Activated CD8-positive, alpha-beta T cell treated with anti-CD3 and anti-CD28 coated beads for 36 hours (primary cell): ENCODE measurements at regions of chr3 and their contacts with region 1.

Region 1: DNA sequence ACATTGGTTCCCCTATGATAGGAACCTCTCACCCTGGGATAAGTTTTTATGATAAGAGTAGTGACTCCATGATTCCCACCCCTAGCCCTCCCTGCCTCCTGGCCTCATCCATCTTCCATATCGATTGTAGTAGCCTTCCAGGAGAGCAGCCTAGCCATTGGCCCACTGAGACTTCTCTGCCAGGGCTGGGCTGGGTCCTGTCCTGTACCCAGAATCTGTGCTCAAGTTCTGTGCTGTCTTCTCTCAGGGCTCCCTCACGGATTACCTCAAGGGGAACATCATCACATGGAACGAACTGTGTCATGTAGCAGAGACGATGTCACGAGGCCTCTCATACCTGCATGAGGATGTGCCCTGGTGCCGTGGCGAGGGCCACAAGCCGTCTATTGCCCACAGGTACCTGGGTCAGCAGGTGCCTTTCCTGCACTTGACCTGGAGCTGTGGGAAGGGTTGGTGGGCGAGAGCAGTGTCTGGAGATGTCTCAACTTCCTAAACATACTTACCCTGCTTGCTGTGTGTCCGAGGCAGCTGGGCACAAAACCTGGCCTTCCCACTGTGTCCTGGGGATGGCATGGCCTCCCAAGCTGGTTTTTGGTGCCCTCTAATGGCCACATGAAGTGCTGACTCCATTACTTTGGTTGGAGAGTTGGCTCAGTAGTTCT is 16.6 kb upstream of the EXOG start:
- DNase-seq: peak; percentile 59
- ATAC-seq: peak; percentile 75
- H3K4me3 Mint-ChIP-seq: no peak overlapping the region
- H3K27ac Mint-ChIP-seq: no peak overlapping the region
- H3K4me1 Mint-ChIP-seq: no peaks in the 10 kb centered on the region
- H3K27me3 Mint-ChIP-seq: no peaks in the 10 kb centered on the region
- CTCF ChIP-seq: peak; percentile 81

Region 2: DNA sequence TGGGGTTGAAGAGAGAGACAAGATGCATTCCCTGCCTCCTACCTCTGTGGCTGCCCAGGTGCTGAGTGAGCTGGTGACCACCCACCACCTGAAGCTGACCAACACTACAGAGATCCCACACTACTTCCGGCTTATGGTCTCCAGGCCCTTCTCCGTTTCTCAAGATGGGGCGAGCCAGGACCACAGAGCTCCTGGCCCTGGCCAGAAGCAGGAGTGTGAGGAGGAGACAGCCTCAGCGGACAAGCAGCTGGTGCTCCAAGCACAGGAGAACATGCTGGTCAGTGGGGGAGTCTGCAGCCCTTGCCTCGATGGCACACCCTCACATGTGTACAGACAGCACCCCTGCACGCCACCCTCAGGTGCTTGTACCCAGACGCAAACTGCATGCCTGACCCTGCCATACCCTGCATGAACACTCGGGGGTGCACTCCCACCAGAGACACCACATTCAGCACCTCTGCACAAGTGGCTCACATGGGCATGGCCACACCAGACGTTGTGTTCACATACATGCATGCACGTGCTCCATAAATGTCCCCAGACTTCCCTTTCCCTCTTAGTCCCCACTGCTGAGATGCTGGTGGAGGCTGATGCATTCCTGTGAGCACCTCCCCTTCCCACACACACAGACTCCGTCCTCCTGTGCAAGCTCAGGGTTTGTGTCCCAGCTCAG is 361.7 kb before region 1 on chr3:
- CTCF ChIA-PET with region 1: interaction called, 20 read pairs
- POLR2A ChIA-PET with region 1: no interaction called
- intact Hi-C with region 1: loop called (anchors 10 kb)
- DNase-seq: peak; percentile 87
- ATAC-seq: peak; percentile 97
- H3K4me3 Mint-ChIP-seq: no peak overlapping the region
- H3K27ac Mint-ChIP-seq: no peak overlapping the region
- H3K4me1 Mint-ChIP-seq: peaks cover 7% of the 10 kb centered on the region
- H3K27me3 Mint-ChIP-seq: no peaks in the 10 kb centered on the region
- CTCF ChIP-seq: peak; percentile 86

Region 3: DNA sequence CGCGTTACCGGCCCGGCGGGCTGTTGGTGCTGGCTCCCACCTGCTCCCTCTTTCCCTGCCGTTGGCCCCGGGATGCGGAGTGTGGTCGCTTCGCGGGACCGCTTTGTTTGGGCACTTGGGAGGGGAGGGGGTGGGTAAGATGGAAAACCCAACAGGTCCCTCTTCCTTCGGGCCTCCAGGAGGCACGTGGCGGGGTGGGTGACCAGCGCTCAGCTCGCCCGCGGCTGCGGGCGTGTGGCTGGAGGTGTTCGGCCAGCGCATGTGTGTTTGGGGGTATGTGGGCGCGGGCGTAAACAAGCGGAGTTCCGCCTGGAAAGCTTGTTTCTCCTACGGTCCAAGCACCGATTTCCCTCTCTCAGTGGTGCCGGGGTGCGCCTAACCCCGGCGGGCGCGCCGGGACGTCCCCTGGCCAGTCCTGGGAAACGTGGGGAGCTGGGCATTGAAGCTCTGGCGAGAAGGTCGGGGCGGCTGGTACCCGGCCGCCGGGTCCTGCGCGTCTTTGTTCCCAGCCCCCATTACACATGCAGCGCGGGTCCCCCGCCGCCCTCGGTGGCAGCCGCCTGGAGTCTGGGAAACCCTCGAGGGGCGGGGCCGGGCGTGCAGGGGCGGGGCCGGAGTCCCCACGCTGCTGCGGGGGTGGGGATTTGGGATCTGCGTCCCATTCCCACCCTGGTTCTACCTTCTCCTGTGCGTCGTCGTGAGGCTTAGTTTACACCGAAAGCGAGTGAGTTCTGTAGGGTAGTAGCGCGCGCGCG is 24.5 kb before region 1 on chr3:
- CTCF ChIA-PET with region 1: interaction called, 11 read pairs
- POLR2A ChIA-PET with region 1: no interaction called
- intact Hi-C with region 1: no loop called
- DNase-seq: peak; percentile 72
- ATAC-seq: peak; percentile 50
- H3K4me3 Mint-ChIP-seq: peak overlapping the region; percentile 90
- H3K27ac Mint-ChIP-seq: peak overlapping the region; percentile 42
- H3K4me1 Mint-ChIP-seq: peaks cover 8% of the 10 kb centered on the region
- H3K27me3 Mint-ChIP-seq: no peaks in the 10 kb centered on the region
- CTCF ChIP-seq: no peak

Region 4: DNA sequence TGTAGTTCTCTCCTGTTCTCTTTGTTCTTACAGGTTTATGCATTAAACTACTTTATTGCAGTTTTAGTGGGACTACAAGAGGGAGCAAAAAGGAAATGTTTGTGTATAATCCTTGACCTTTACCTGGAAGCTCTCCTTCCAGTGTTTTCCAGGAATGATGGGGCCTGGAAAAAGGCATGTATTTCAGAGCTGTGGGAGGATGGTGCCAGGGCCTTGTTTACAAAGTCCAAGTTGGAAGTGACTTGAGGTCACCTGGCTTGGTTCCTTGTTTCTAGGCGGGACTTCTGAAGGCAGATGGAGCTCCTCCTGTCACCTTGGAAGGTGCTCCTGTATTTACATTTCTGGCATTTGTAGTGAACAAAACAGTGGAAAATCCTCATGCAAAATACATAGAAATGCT is 10.8 kb before region 1 on chr3:
- CTCF ChIA-PET with region 1: interaction called, 12 read pairs
- POLR2A ChIA-PET with region 1: no interaction called
- intact Hi-C with region 1: no loop called
- DNase-seq: no peak
- ATAC-seq: no peak
- H3K4me3 Mint-ChIP-seq: no peak overlapping the region
- H3K27ac Mint-ChIP-seq: no peak overlapping the region
- H3K4me1 Mint-ChIP-seq: peaks cover 19% of the 10 kb centered on the region
- H3K27me3 Mint-ChIP-seq: no peaks in the 10 kb centered on the region
- CTCF ChIP-seq: no peak

Region 5: DNA sequence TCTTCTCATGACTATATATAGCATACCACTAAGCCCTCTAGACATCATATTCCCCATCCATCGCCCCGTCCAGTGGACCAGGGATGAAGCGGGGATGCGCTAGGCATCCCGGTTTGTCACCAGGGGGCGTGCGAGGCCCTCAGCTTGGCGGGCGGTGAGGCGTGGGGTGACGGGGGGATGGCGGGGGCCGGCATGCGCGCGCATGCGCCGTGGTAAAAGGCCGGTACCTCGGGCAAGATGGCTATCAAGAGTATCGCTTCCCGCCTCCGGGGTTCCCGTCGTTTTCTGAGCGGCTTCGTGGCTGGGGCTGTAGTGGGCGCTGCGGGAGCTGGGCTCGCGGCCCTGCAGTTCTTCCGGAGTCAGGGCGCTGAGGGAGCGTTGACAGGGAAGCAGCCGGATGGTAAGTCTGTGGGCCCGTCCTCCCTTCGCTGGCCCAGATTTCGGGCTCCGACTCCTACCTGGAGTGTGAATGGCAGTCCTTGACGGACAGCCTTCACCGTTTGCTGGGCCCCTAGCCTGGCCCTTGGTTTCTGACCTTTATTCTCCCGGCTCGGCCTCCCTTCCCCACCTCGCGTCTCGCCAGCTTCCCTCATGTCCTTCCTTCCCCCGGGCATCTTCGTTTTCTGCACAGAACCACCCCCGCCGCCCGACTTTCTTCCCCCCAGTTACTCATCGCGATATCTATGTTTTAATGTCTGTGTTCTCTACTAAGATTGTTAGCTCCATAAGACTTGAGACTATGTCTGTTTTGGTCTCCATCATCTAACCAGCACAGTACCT is 16.8 kb after region 1 on chr3 and contains the start of gene EXOG:
- CTCF ChIA-PET with region 1: interaction called, 36 read pairs
- POLR2A ChIA-PET with region 1: no interaction called
- intact Hi-C with region 1: no loop called
- DNase-seq: peak; percentile 93
- ATAC-seq: peak; percentile 95
- H3K4me3 Mint-ChIP-seq: peak within 1 kb of the TSS; percentile 99
- H3K27ac Mint-ChIP-seq: peak within 1 kb of the TSS; percentile 95
- H3K4me1 Mint-ChIP-seq: peaks cover 18% of the 10 kb centered on the region
- H3K27me3 Mint-ChIP-seq: no peaks in the 10 kb centered on the region
- CTCF ChIP-seq: peak; percentile 84
- total RNA-seq, gene EXOG: 16.8 to 17.7 TPM